ENCODE measurements at regions of chr19 and their contacts with region 1.

Region 1: DNA sequence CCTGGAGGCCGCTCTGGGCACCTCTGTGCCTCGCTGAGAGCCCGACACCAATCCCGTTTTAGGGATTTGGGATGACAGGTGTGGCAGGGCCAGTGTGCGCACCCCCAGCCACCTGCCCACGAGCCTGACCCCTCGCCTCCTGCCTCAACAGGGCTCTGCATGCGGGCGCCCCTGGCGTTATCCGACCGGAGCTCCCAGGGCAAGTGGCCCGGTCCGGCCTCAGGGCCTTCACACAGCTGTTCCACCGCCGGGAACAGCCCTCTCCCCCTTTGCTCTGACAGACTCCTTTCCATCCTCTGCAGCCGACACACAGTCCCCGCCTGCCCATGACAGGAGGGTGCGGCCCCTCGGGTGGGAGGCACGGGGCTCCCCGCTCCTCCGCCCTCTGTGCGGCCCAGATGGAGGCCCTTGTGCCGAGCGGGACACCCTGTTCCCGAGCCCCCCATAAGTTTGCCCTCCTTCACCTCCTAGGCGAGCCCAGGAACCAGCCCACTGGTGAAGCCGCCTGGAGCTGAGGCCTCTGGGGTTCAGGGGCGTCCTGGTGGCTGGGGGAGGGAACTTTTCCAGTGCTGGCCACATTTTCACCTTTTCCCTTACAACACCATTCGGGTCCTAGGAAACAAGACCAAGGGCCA is 7.0 kb upstream of the WDR18 start:
- DNase-seq: no peak

Region 2: GRCh38 chr19:1000095-1000494 is 22.9 kb after region 1 on chr19 and contains the start of gene GRIN3B:
- intact Hi-C with region 1: loop called in 1 of 2 experiments (anchors 1 kb)
- DNase-seq: peak; percentile 91
- total RNA-seq, gene GRIN3B: 0.05 TPM in 1 of 2 donors, not detected in the other

Region 3: DNA sequence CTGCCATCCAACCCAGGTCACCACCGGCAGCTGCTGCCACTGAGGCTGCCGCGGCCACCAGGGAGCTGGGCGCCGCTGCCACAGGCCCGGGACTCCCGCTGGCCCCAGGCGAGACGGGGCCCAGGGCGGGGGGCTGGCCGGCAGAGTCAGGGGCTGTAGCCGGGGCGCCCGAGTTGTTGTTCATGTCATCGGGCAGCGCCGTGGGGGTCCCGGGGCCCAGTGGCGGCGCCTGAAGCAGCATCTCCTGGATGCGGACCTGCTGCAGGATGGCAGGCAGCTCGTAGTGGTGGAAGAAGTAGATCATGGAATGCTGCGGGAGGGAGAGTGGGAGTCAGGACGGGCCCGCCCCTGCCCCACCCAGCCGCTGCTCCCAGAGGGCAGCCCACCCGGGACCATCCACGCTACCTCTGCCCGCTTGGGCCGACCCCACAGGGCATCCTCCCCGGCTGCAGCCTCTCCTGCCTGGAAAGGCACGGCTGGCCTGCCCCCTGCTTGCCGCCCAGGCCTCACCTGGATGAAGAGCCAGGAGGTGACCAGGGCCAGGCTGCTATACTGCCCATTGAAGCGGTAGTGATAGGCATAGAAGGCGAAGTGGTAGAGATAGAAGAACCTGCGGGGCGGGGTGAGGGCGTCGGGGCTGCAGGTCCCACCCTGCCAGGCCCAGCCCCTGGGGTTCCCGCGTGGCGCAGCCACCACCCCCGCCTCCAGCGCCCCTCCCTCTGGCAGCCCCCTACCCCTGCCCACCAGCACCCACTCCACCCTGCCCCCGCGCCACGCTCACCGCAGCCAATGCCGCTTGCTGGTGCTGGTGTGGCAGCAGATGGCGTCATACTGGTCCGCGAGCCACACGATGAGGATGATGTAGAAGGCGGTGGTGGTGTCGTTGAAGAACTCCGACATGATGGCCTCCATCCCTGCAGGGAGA is 33.7 kb after region 1 on chr19:
- intact Hi-C with region 1: no loop called
- DNase-seq: no peak

Measured in posterior vena cava (tissue), 2 donors.